ENCODE measurements at regions of chr7 and their contacts with region 1.

Region 1: DNA sequence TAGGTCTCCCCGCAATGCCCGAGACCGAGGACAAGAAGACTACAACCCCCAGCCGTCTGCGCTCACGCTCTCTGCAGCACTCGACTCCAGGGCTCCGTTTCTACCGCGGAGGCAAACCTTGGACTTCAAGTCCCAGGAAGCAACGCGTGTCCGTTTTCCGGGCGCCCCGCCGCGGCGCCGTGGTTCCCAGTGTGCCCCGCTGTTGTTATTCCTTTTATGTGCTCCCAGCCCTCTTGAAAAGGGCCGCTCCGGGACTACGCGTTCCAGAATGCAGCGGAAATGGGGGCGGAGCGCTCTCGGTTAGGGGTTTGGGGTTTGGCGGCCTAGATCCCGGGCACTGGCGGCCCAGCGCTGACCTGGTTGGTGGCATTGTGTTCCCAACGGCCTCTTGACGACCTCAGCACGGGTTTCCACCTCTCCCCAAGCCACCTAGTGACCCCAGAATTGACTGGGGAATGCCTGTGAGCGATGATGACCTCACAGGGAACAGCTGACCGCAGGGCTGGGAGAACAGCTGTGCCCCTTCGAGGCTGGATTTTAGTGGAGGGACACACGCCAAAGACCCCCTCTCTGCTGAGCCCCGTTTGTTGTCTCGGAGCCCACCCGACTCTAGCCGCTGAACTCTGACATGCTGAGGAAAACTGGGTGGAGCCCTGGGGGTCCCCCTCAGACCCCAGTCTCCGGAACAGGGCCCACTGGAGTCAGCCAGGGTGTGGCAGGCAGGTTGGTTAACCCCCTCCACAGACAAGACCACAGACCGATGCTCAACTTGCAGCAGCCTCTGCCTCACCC is 488 bp upstream of the CDK5 start:
- DNase-seq: peak; percentile 99
- ATAC-seq: peak; percentile 89 to 90

Region 2: GRCh38 chr7:151028131-151028947 is 29.8 kb before region 1 on chr7 and contains the start of gene ABCB8:
- intact Hi-C with region 1: loop called in 1 of 2 experiments (anchors 2 kb)
- DNase-seq: peak; percentile 97
- ATAC-seq: peak; percentile 96 to 98
- total RNA-seq, gene ABCB8: 20.1 to 21.6 TPM

Region 3: DNA sequence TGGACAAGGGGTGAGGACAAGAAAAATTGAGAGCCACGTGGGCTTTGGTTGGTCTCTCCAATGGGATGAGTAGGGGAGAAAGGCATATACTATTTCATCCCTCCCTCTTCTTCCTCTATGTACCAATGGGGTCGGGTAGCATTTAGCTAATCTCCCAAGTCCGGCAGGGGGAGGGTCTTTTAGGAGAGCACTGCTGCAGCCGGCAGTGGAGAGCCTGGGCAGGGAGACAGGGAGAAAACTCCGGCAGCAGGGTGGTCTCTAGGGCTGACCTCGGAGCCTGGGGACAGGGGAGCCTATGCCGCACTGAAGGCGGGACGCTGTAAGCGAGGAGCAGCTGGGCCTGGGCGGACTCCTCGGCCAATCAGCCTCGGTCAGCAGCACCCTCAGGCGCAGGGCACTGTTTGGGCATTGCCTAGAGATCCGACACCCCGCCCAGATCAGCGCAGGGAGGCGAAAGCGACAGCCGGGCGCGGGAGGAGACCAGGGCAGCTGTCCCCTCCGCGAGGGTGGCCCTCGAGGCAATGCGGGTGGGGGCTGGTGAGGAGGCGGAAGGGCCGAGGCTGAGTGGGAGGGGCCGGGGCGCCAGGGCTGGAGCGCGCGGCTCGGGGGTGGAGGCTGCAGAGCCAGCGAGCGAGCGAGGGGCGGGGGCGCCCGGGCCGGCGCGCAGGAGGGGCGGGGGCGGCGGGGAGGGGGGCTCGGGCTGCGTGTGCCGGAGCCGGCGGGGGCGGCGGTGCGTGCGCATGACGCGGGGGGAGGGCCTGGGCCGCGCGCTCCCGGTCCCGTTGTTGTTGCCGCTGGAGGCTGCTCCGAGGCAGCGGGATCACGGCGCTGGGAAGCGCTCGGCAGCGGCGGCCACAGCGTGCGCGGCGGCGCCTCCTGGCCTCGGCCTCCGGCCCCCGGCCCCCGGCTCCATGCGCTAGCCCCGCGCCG is 27.8 kb after region 1 on chr7 and contains the start of gene AGAP3:
- intact Hi-C with region 1: loop called in 1 of 2 experiments (anchors 2 kb)
- DNase-seq: peak; percentile 91
- ATAC-seq: peak; percentile 55 to 60
- total RNA-seq, gene AGAP3: 53.0 to 61.5 TPM

Region 4: DNA sequence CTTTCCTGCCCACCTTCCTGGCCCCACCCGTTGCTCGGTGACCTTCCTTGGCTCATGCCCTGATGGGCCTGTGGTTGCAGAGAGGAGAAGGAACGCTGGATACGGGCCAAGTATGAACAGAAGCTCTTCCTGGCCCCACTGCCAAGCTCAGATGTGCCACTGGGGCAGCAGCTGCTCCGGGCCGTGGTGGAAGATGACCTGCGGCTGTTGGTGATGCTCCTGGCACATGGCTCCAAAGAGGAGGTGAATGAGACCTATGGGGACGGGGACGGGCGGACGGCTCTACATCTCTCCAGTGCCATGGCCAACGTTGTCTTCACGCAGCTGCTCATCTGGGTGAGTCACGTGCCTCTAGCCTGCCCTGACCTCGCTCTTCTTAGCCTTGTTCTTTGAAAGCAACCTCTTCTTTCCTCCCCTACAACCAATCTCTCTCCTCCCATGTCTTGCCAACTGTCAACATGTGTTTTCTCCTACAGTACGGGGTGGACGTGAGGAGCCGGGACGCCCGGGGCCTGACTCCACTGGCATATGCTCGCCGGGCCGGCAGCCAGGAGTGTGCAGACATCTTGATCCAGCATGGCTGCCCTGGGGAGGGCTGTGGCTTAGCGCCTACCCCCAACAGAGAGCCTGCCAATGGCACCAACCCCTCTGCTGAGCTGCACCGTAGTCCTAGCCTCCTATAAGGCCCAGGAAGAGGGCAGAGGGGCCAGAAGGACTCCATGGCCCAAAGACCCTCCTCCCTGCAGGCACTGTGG is 85.3 kb after region 1 on chr7:
- intact Hi-C with region 1: no loop called
- DNase-seq: no peak
- ATAC-seq: peak in 1 of 2 donors; percentile 24

Region 5: GRCh38 chr7:151226875-151227782 is 168.9 kb after region 1 on chr7 and contains the start of gene ABCF2:
- intact Hi-C with region 1: loop called in 1 of 2 experiments (anchors 10 kb)
- DNase-seq: peak; percentile 99
- ATAC-seq: peak; percentile 99
- total RNA-seq, gene ABCF2: 21.4 to 33.6 TPM

Measured in left cardiac atrium (tissue), 4 donors.